Activated T-helper 2 cell treated with anti-CD3 and anti-CD28 coated beads, Interferon-gamma antibody, Interleukin-2, Interleukin-4, amounts not matched to agents 10 μg/mL and 5 μg/mL and 100 μg/mL, durations not matched to agents 14 hours and 24 hours and 36 hours (primary cell): ENCODE measurements at regions of chr2 and their contacts with region 1.

Region 1: DNA sequence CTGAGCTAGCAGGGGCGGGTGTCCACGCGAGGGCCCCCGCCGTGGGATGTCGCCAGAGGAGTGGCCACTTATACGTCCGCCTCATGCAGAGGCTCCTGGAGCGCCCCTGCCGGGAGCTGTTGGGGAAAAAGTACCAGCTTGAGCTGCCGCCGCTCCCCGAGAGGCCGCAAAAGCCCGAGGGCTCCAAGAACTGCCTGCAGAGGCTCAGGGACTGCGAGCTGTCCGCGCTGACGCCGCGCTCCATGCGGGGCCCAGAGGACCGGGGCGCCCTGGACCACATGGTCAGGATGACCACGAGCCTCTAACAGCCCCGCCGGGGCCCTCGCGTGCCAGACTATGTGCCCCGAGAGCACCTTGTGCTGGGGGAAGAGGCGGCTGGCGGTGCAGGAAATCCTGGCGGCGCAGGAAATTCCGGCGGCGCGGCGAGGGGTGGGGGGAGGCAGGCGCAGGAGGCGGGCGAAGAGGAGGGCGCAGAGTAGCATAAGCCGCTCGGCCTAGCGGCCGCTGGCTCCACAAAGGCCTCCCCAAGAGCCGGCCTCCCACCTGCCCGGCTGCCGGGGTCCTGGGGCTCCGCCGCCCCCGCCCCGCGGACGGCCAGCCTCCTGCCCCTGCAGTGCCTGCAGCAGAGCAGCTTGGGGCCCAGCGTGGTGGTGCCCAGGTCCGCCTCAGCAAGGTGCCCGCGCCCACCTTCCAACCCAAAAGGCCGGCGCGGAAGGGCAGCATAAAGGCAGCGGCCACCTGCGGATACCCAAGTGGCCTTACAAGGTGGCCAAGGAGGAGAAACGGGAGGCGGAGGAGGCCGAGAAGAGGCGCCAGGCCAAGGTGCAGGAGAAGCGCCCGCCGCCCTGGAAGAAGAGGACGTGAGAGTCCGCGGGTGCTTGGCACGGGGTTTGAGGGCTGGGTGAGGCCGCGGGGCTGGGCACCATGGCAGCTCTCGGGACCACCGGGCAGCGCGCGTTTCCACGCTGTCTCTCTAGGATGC is 42.1 kb upstream of the TRIM43B start:
- DNase-seq: peak; percentile 63
- H3K4me3 Mint-ChIP-seq: peak overlapping the region; percentile 96
- H3K27ac Mint-ChIP-seq: peak overlapping the region; percentile 90
- H3K4me1 Mint-ChIP-seq: peaks cover 43% of the 10 kb centered on the region
- H3K27me3 Mint-ChIP-seq: no peaks in the 10 kb centered on the region

Region 2: DNA sequence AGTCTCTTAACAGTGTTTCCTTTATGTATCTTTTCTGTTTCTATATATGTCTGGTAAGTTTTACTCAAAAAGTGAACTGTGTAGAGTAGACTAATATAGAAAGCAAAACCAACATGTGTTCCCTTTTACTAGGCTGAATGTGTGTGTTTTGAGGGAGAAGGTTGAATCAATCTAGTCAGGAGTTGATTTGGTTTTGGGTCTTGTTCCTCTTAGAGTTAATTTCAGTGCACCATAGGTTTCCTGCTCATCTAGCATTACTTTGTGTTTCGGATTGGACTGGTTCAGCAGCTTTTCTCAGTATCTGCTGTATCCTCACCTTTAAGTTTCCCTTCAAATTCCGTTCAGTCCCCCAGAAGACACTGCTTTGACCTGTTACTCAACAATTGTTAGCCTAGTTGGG is 13.2 kb after region 1 on chr2:
- intact Hi-C with region 1: loop called (anchors 1 kb)
- DNase-seq: no peak
- H3K4me3 Mint-ChIP-seq: no peak overlapping the region
- H3K27ac Mint-ChIP-seq: peak overlapping the region; percentile 70
- H3K4me1 Mint-ChIP-seq: peaks cover 20% of the 10 kb centered on the region
- H3K27me3 Mint-ChIP-seq: no peaks in the 10 kb centered on the region

Region 3: GRCh38 chr2:95552911-95553310 is 26.3 kb after region 1 on chr2:
- intact Hi-C with region 1: no loop called
- DNase-seq: no peak
- H3K4me3 Mint-ChIP-seq: no peak overlapping the region
- H3K27ac Mint-ChIP-seq: no peak overlapping the region
- H3K4me1 Mint-ChIP-seq: peaks cover 3% of the 10 kb centered on the region
- H3K27me3 Mint-ChIP-seq: peaks cover 41% of the 10 kb centered on the region

Region 4: DNA sequence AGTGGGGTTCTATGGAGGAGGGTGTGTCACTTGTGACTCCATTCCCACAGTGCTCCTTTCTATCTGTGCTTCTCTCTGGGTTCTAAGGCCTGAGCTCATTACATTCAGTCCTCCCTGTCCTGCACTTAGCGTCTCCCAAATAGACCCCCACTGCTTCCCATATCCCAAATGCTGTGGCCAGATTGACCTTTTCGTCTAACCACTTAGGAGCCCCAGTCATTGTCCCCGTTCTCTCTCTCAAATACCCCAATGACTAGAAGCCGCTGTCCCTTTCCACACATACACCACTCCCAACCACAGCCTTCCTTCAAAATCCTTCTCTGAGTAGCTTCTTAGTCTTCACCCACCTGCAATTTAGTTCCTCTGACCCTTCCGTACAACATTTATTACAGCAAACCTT is 211.7 kb after region 1 on chr2:
- intact Hi-C with region 1: no loop called
- DNase-seq: no peak
- H3K4me3 Mint-ChIP-seq: no peak overlapping the region
- H3K27ac Mint-ChIP-seq: no peak overlapping the region
- H3K4me1 Mint-ChIP-seq: no peaks in the 10 kb centered on the region
- H3K27me3 Mint-ChIP-seq: peaks cover 23% of the 10 kb centered on the region